Tibial artery (tissue), 4 donors: ENCODE measurements at regions of chr20 and their contacts with region 1.

Region 1: GRCh38 chr20:32743237-32744112 is at the start of gene COMMD7:
- DNase-seq: peak; percentile 46 to 79
- H3K4me3 ChIP-seq: peak within 1 kb of the TSS; percentile 95 to 96
- H3K27ac ChIP-seq: peak within 1 kb of the TSS; percentile 87 to 89
- H3K4me1 ChIP-seq: peaks cover 0 to 25% (median 13%) of the 10 kb centered on the region in 4 donors
- H3K27me3 ChIP-seq: no peaks in the 10 kb centered on the region
- CTCF ChIP-seq: no peak

Region 2: GRCh38 chr20:32674362-32674789 is 69.1 kb before region 1 on chr20:
- intact Hi-C with region 1: no loop called
- DNase-seq: no peak
- H3K4me3 ChIP-seq: no peak overlapping the region
- H3K27ac ChIP-seq: no peak overlapping the region
- H3K4me1 ChIP-seq: no peaks in the 10 kb centered on the region
- H3K27me3 ChIP-seq: no peaks in the 10 kb centered on the region
- CTCF ChIP-seq: no peak

Region 3: GRCh38 chr20:32762149-32762753 is 18.8 kb after region 1 on chr20 and contains the start of gene DNMT3B:
- intact Hi-C with region 1: loop called (anchors 1 kb)
- DNase-seq: peak; percentile 59 to 83
- H3K4me3 ChIP-seq: peak within 1 kb of the TSS; percentile 77 to 92
- H3K27ac ChIP-seq: peak within 1 kb of the TSS; percentile 44 to 49
- H3K4me1 ChIP-seq: peaks cover 0 to 20% (median 14%) of the 10 kb centered on the region in 4 donors
- H3K27me3 ChIP-seq: no peaks in the 10 kb centered on the region
- CTCF ChIP-seq: peak in 1 of 2 experiments; percentile 25